ENCODE measurements at regions of chr11 and their contacts with region 1.

Region 1: DNA sequence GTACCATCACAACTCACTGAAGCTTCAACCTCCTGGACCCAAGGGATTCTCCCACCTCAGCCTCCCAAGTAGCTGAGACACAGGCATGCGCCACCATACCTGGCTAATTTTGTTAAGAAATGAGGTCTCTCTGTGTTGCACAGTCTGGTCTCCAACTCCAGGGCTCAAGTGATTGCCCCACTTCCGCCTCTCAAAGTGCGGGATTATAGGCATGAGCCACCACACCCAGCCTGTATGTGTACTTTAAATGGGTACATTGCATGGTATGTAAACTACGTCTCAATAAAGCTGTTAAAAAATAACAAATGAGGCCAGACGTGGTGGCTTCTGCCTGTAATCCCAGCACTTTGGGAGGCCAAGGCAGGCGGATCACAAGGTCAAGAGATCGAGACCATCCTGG is 36.2 kb upstream of the DDX6 start:
- DNase-seq: no peak
- H3K4me3 ChIP-seq: no peak overlapping the region
- H3K4me3 Mint-ChIP-seq: no peak overlapping the region
- H3K27ac ChIP-seq: no peak overlapping the region
- H3K27ac Mint-ChIP-seq: no peak overlapping the region
- H3K4me1 ChIP-seq: no peaks in the 10 kb centered on the region
- H3K4me1 Mint-ChIP-seq: no peaks in the 10 kb centered on the region
- H3K27me3 ChIP-seq: no peaks in the 10 kb centered on the region
- H3K27me3 Mint-ChIP-seq: no peaks in the 10 kb centered on the region

Region 2: GRCh38 chr11:118715245-118715831 is 111.8 kb before region 1 on chr11:
- CTCF ChIA-PET with region 1: no interaction called
- POLR2A ChIA-PET with region 1: no interaction called
- DNase-seq: no peak
- H3K4me3 ChIP-seq: no peak overlapping the region
- H3K4me3 Mint-ChIP-seq: no peak overlapping the region
- H3K27ac ChIP-seq: no peak overlapping the region
- H3K27ac Mint-ChIP-seq: no peak overlapping the region
- H3K4me1 ChIP-seq: no peaks in the 10 kb centered on the region
- H3K4me1 Mint-ChIP-seq: peaks cover 0 to 2% (median 0%) of the 10 kb centered on the region in 3 donors
- H3K27me3 ChIP-seq: no peaks in the 10 kb centered on the region
- H3K27me3 Mint-ChIP-seq: no peaks in the 10 kb centered on the region

Region 3: DNA sequence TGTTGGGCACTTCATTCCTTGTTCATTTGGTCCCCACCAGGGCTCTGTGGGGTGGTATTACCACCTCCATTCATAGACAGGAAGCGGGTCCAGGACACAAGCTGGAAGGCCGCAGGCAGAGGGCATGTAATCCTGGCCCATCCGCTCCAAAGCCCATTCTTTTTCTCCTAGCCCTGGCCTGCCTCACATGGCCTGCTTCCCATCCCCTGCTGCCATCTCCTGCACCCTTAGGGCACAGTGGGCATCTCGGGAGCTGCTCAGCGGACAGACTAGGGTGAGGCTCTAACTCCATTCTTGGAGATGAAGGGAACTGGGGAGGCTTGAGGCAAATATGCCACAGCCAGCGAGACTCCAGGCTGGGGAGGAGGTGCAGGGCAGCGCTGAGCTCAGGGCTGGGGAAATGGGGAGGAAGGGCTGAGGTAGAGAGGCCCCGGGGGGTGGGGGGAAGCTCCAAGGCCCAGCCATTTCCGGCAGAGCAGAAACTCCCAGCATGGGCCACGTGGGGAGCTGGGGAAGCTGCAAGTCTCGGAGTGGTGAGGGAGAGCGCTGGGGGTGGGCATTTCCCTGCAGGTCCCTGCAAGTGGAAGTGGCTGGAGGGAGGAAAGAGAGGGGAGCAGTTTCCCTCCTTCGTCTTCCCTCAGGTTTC is 113.0 kb after region 1 on chr11:
- CTCF ChIA-PET with region 1: no interaction called
- POLR2A ChIA-PET with region 1: interaction called, 16 read pairs
- DNase-seq: peak in 3 of 5 donors; percentile 19 to 62 (median 54)
- H3K4me3 ChIP-seq: peak overlapping the region; percentile 20
- H3K4me3 Mint-ChIP-seq: peak overlapping the region in 1 of 7 donors; percentile 37
- H3K27ac ChIP-seq: no peak overlapping the region
- H3K27ac Mint-ChIP-seq: peak overlapping the region in 1 of 8 donors; percentile 66
- H3K4me1 ChIP-seq: peaks cover 28% of the 10 kb centered on the region
- H3K4me1 Mint-ChIP-seq: peaks cover 18 to 37% (median 31%) of the 10 kb centered on the region in 3 donors
- H3K27me3 ChIP-seq: no peaks in the 10 kb centered on the region
- H3K27me3 Mint-ChIP-seq: peaks cover 0 to 6% of the 10 kb centered on the region in 2 donors